Ovary (tissue), 10 donors: ENCODE measurements at regions of chr17 and their contacts with region 1.

Region 1: GRCh38 chr17:47895856-47896671 is at the start of gene SP2:
- DNase-seq: peak; percentile 98 to 100 (median 99)
- H3K4me3 ChIP-seq: peak within 1 kb of the TSS; percentile 89
- H3K27ac ChIP-seq: peak within 1 kb of the TSS; percentile 99 to 100
- H3K4me1 ChIP-seq: peaks cover 3% of the 10 kb centered on the region
- H3K27me3 ChIP-seq: no peaks in the 10 kb centered on the region
- CTCF ChIP-seq: peak in 2 of 3 donors; percentile 27 to 39
- EP300 ChIP-seq: no peak
- POLR2A ChIP-seq: peak; percentile 74
- total RNA-seq, gene SP2: 2.6 to 22.5 (median 14.6) TPM

Region 2: DNA sequence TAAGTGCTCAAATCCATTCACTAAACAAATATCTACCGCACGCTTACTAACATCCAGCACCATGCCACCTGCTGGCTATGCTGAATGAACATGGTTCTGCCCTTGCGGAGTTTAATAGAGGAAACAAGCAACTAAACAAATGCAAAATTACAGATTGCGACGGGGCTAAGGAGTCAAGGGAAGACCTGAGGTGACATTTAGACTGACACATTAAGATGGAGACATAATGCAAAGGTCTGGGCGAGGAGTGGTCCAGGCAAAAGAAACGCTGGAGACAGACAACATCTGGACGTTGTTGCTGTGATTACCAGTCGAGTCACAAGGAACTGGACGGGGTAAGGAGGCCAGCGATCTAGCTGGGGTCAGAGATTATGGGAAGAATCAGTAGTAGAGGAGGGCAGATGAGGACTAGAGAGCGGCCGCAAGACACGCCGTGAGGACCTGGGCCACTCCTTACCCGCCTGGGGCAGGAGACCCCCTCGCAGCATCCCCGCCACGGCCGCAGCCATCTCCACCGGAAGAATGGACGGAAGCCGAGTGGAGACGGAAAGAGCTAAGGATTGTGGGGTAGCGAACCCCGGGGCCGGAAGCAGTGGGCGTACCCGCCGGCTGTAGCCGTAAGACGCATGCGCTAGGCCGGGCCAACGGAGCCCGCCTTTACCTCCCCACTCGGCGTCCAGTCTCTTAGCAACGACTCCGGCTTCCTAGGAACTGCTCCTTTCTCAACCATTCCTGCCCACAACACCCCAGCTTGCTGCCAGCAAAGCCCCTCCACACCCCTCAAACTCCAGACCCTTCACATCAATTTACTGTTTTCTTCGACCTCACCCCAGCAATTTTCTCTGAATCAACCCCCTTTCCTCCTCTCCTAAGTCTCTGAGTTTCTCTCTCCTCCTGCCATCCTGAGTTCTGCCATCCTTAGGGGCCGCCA is 64.8 kb before region 1 on chr17 and contains the starts of genes LRRC46 and MRPL10:
- intact Hi-C with region 1: no loop called
- DNase-seq: peak; percentile 94 to 97 (median 95)
- H3K4me3 ChIP-seq: peak within 1 kb of the TSS; percentile 52
- H3K27ac ChIP-seq: no peak within 1 kb of the TSS
- H3K4me1 ChIP-seq: peaks cover 4% of the 10 kb centered on the region
- H3K27me3 ChIP-seq: no peaks in the 10 kb centered on the region
- CTCF ChIP-seq: no peak
- EP300 ChIP-seq: no peak
- POLR2A ChIP-seq: peak; percentile 88
- total RNA-seq, gene LRRC46: 0.35 to 17.1 (median 1.2) TPM
- total RNA-seq, gene MRPL10: 30.4 to 59.5 (median 48.4) TPM

Region 3: DNA sequence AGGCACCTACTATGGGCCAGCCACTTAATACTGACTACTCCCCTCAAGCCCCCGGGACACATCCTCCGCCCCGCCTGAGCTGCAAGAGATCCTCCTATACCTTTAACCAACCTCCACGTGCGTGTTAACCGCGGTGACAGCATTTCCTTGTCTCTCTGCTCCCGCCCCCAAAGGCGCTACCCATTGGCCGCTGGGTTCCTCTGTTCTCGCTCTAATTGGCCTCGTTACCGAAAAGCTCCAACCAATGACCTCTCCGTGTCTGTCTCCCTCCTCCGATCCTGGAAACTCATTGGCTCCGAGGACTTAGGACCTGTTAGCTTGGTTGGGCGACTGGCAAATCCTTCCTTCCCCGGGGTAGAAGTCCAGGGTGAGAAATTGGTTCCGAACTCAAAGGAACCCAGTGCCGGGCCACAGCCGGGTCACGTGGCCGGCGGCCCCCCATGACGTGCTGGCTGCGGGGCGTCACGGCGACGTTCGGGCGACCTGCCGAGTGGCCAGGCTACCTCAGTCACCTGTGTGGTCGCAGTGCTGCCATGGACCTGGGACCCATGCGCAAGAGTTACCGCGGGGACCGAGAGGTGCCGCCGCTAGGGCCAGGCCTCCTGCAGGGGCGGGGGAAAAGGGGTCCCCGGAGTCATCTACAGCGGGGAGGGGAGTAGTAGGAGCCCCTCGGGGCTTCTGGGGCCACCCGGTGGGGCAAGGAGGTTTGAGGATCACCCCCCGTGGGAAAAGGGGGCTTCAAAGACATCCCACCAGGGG is 45.4 kb after region 1 on chr17 and contains the start of gene PNPO:
- intact Hi-C with region 1: loop called in 1 of 4 experiments (anchors 10 kb)
- DNase-seq: peak; percentile 86 to 92 (median 89)
- H3K4me3 ChIP-seq: peak within 1 kb of the TSS; percentile 82
- H3K27ac ChIP-seq: peak within 1 kb of the TSS; percentile 33 to 61
- H3K4me1 ChIP-seq: peaks cover 6% of the 10 kb centered on the region
- H3K27me3 ChIP-seq: no peaks in the 10 kb centered on the region
- CTCF ChIP-seq: no peak
- EP300 ChIP-seq: no peak
- POLR2A ChIP-seq: peak; percentile 15
- total RNA-seq, gene PNPO: 9.5 to 26.5 (median 21.8) TPM

Region 4: GRCh38 chr17:47970704-47971463 is 74.8 kb after region 1 on chr17 and contains the start of gene CDK5RAP3:
- intact Hi-C with region 1: loop called in 1 of 4 experiments (anchors 5 kb)
- DNase-seq: peak; percentile 99 to 100 (median 100)
- H3K4me3 ChIP-seq: peak within 1 kb of the TSS; percentile 94
- H3K27ac ChIP-seq: peak within 1 kb of the TSS; percentile 2 to 78
- H3K4me1 ChIP-seq: peaks cover 11% of the 10 kb centered on the region
- H3K27me3 ChIP-seq: no peaks in the 10 kb centered on the region
- CTCF ChIP-seq: peak; percentile 97 to 99 (median 99)
- EP300 ChIP-seq: no peak
- POLR2A ChIP-seq: peak; percentile 64
- total RNA-seq, gene CDK5RAP3: 125 to 197 (median 144) TPM